Mammary epithelial cell (primary cell): ENCODE measurements at regions of chr5 and their contacts with region 1.

Region 1: DNA sequence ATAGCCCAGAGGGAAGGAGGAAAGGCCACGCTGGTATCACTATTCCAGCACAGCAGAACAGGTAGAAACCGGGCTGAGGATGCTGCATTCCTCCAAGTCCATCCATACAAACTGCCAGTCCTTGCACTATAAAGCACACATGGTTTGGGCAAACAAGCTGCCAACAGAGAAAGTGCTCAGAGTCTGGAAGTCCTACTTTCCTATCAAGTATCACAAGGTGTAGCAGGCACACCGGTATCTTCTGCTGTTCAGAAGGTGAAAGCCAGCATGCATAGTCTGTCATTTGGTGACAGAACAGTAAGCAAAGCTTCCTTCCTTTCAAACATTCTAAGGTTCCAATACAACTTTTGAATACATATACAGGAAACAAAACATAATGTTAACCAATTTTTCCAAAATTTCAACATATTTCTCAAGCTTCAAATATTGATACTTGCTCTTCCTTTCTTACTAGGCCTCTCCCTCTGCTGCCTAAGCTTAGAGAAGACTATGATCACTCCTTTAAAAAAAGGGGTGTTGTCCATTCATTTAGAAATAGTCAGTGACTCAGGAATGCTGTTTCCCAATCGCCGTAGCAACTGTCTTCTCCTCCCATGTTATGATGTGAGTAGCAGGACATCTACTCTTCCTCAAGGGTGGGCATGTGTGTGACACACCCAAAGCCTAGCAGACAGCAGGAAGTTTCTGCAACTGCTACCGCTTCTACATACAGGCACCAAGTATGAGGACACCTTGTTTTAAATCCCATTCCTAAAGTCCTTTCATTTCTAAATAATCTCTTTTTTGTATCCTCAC is 14.7 kb downstream of the DIAPH1 start:
- DNase-seq: peak; percentile 93
- H3K4me3 ChIP-seq: peak overlapping the region in 1 of 3 experiments; percentile 27
- H3K27ac ChIP-seq: peak overlapping the region; percentile 98
- H3K4me1 ChIP-seq: peaks cover 18% of the 10 kb centered on the region
- H3K27me3 ChIP-seq: no peaks in the 10 kb centered on the region
- CTCF ChIP-seq: no peak

Region 2: DNA sequence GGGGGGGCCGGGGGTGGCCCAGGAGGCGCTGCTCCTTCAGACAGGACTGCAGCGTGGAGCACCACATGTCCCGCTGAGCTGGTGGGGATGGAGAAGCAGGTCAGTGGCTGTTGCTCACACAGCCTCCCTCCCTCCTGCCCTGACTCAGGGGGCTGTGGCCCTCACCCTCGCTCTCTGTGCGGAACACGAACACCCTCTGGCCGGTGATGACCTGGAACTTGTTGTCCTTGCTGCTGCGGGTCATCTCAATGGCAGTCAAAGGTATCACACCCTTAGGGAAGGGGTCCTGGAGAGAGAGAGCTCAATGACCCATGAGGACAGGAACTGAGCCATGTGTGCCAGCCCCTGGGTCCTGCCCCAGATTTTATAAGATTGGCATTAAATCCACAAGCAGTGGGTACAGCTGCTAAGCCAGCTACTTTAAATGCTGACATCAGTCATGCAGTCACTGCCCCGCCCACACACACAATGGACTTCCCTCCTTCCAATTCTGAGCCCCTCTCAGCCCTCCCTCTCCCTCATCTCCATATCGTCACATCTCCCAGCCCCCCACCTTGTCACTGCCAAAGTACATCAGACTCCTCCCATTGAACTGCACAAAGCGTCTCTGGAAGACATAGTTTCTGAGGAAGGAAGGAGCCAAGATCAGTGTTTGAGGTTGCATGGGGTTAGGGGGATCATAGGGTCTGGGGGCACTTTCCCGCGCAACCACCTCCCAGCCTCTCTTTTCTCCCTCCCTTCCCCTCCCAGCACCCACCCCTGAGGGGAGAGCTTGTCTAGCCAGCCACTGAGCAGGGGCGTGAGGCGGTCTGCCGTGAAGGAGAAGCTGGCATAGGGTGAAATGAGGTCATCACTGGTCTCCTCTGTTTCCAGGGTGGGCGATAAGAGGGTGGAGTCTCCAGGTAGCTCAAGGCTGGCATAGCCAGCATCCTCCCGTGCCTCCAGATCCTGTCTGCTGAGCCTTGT is 69.0 kb after region 1 on chr5:
- CTCF ChIA-PET with region 1: no interaction called
- dilution Hi-C with region 1: loop called (anchors 5 kb)
- in situ Hi-C with region 1: no loop called
- intact Hi-C with region 1: no loop called
- DNase-seq: no peak
- H3K4me3 ChIP-seq: no peak overlapping the region
- H3K27ac ChIP-seq: no peak overlapping the region
- H3K4me1 ChIP-seq: peaks cover 6% of the 10 kb centered on the region
- H3K27me3 ChIP-seq: no peaks in the 10 kb centered on the region
- CTCF ChIP-seq: no peak